GM18951 (cell line): ENCODE measurements at regions of chr3 and their contacts with region 1.

Region 1: DNA sequence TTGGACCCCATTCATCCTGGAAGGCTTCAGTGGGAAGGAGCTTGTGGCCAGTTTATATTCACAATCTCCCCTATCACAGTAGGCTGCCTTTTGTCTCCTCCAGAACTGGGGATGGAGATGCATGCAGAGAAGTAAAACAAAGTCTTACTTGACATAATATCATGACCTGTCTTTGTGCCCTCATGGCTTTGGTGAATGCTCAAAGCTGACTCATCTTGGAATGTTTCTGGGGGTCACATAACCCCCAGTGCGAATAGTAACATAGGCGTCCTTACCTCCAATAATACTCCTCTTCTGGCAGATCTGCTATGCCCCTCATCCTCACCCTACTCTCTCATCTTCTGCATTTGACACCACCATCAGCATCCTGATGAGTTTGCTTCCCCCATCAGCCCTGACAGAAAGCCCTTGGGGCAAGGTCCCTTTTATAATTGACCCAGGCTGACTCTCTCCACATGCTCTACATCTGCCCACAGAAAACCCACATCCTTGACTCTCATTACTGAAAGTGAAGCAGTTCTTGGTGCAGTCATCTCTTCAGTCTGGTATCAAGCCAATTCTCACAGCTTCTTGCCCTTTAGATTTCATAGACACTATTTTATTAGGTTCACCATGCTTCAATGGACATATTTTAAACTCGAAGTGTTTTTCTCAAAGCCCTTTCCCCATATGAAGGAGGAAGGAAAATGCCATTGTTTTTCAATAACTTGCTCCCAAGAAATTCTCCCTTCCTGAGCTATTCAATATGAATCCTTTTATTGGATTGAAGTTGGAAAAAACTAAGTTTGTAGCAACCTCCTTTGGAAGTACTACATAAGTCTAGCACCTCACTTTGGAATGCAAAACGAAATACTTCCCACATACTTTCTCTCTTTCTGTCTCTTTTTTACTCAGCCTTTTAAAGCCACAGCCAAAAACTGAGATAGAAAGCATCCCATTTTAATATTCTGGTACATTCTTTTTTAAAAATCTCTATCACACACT is 36.6 kb downstream of the OSTN start:
- POLR2A ChIP-seq: no peak

Region 2: GRCh38 chr3:190306513-190307165 is 929.0 kb before region 1 on chr3:
- in situ Hi-C with region 1: no loop called
- POLR2A ChIP-seq: no peak

Region 3: GRCh38 chr3:191158815-191159214 is 76.8 kb before region 1 on chr3:
- in situ Hi-C with region 1: loop called (anchors 5 kb)
- POLR2A ChIP-seq: no peak

Region 4: DNA sequence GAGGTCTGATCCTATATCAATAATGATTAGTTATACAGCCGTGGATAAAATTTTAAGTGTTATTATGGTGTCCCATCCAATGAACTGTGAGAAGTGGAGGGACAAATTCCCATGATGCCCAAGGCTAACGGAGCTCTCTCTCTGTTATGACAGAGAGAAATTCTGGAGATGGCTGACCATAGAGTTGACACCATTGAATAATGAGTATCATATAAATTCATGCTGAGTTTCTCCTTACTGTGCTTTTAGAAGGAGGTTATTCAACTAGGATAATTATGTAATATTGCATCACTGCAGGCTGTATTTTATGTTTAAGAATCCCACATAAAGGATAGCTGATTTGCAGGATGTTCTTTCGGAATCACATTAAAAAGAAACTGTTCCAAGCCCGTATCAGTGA is 308.3 kb after region 1 on chr3:
- in situ Hi-C with region 1: no loop called
- POLR2A ChIP-seq: no peak